ENCODE measurements at regions of chr20 and their contacts with region 1.

Region 1: DNA sequence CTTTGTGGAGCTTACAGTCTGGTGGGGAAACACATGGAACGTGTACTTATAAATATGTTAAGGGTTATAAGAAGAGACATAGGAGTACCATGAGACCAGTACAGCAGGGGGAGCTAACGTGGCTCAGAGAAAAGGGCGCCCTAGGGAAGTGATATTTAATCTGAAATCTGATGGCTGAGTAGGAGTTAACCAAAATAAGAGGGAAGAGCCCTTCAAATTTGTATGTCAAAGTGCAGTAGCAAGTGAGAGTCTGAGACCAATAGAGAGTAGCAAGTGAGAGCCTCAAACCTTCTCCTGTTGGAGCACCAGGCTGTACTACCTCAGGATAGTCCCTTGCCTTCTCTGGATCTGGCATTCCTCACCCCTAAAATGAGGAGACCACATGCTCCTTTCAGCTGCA is 6.1 kb upstream of the PKIG start:
- DNase-seq: peak; percentile 55
- CTCF ChIP-seq: peak; percentile 63

Region 2: DNA sequence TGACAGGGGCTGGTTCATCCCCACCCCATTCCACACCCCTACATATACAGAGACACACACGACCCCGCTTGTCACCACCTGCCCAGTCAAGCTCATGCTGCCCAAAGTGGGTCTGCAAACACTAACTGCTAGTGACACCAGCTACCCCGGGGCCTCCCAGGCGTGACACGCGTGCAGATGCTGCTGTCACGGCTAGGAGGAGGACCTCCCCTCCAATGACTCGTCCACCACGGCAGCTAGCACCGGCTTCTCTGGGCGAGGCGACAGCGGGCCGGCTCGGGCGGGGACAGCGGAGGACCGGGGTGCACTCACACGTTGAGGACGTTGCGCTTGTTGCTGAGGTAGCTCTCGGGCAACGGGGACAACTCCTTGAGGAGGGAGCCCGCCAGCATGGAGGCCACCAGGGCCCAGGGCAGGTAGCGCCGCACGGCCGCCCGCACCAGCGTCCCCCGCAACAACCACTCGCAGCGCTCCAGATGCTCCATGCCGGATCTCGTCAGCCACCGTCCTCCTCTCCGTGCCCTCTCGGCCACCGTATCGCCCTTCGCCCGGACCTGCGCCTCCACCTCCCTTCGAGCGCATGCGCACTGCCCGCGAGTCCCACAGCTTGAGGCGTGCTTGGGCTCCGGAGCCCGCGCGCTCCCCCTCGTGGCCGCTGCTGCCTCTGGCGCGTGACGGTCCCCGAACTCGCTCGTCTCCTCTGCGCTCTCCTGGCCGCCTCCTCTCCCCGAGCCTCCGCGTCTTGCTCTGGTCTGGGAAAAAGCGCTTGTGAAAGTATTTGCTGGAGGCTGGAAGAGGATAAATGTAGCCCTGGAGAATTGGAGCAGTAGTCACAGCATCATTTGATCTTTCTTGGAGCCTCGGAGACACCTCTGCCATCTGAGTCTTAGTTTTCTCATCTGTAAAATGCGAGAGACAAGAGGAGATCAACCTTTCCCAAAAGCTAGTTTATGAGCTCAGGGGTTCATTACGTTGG is 265.3 kb before region 1 on chr20 and contains the start of gene FITM2:
- CTCF ChIA-PET with region 1: no interaction called
- POLR2A ChIA-PET with region 1: no interaction called
- DNase-seq: peak; percentile 100
- CTCF ChIP-seq: peak; percentile 98

Region 3: DNA sequence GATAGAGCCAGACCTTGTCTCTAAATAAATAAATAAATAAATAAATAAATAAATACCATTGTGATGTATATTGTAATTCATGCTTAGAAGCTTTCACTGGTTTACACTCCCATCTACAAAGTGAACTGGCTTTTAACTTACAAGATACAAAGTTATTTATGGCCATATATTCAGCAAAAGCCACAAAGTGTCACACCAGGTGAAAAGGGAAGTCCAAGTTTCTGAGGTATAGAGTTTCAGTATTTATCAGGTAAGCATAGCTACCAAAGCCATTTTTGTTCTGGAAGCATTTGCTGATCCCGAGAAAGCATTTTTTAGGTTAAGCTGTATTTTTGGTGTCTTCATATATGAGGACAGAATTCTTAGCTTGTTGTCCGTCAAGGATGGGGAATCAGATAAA is 16.1 kb before region 1 on chr20:
- CTCF ChIA-PET with region 1: interaction called, 10 read pairs
- POLR2A ChIA-PET with region 1: no interaction called
- DNase-seq: no peak
- CTCF ChIP-seq: no peak

Region 4: GRCh38 chr20:44586289-44586911 is 10.1 kb after region 1 on chr20:
- CTCF ChIA-PET with region 1: interaction called, 17 read pairs
- POLR2A ChIA-PET with region 1: interaction called, 3 read pairs
- DNase-seq: peak; percentile 57
- CTCF ChIP-seq: no peak

Region 5: GRCh38 chr20:44598423-44599305 is 22.4 kb after region 1 on chr20:
- CTCF ChIA-PET with region 1: interaction called, 18 read pairs
- POLR2A ChIA-PET with region 1: no interaction called
- DNase-seq: no peak
- CTCF ChIP-seq: peak; percentile 14

Region 6: DNA sequence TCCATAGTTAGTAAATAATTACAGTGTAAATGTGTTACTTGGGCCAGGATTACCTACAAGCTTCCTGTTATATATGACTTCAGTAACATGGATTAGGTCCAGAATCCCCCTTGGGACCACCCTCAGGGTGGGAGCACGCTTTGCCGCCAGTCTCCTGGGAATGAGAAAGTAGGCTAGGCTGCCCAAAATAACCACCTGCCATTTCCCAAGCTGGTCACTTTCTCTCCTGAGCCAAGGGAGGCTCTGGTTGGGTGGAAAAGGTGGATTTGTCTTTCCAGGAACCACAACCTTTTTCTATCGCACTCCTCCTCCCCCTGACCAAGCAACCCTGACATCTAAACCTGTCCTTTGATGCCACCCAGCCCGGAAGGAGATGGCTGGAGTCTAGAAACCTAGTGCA is 243.6 kb after region 1 on chr20:
- CTCF ChIA-PET with region 1: no interaction called
- POLR2A ChIA-PET with region 1: no interaction called
- DNase-seq: no peak
- CTCF ChIP-seq: no peak